Activated CD8-positive, alpha-beta T cell treated with anti-CD3 and anti-CD28 coated beads for 36 hours (primary cell): ENCODE measurements at regions of chr5 and their contacts with region 1.

Region 1: GRCh38 chr5:1641560-1642166 is 117.9 kb upstream of the LPCAT1 start:
- DNase-seq: peak; percentile 94
- ATAC-seq: peak; percentile 96
- H3K4me3 Mint-ChIP-seq: no peak overlapping the region
- H3K27ac Mint-ChIP-seq: no peak overlapping the region
- H3K4me1 Mint-ChIP-seq: peaks cover 11% of the 10 kb centered on the region
- H3K27me3 Mint-ChIP-seq: peaks cover 32% of the 10 kb centered on the region
- CTCF ChIP-seq: peak; percentile 99

Region 2: GRCh38 chr5:1380011-1380817 is 261.4 kb before region 1 on chr5:
- CTCF ChIA-PET with region 1: interaction called, 13 read pairs
- POLR2A ChIA-PET with region 1: no interaction called
- intact Hi-C with region 1: loop called (anchors 10 kb)
- DNase-seq: peak; percentile 62
- ATAC-seq: peak; percentile 90
- H3K4me3 Mint-ChIP-seq: peak overlapping the region; percentile 55
- H3K27ac Mint-ChIP-seq: peak overlapping the region; percentile 59
- H3K4me1 Mint-ChIP-seq: peaks cover 7% of the 10 kb centered on the region
- H3K27me3 Mint-ChIP-seq: peaks cover 1% of the 10 kb centered on the region
- CTCF ChIP-seq: peak; percentile 87

Region 3: GRCh38 chr5:1479581-1480188 is 162.0 kb before region 1 on chr5:
- CTCF ChIA-PET with region 1: interaction called, 20 read pairs
- POLR2A ChIA-PET with region 1: no interaction called
- intact Hi-C with region 1: no loop called
- DNase-seq: peak; percentile 68
- ATAC-seq: peak; percentile 81
- H3K4me3 Mint-ChIP-seq: no peak overlapping the region
- H3K27ac Mint-ChIP-seq: no peak overlapping the region
- H3K4me1 Mint-ChIP-seq: peaks cover 9% of the 10 kb centered on the region
- H3K27me3 Mint-ChIP-seq: no peaks in the 10 kb centered on the region
- CTCF ChIP-seq: peak; percentile 91

Region 4: DNA sequence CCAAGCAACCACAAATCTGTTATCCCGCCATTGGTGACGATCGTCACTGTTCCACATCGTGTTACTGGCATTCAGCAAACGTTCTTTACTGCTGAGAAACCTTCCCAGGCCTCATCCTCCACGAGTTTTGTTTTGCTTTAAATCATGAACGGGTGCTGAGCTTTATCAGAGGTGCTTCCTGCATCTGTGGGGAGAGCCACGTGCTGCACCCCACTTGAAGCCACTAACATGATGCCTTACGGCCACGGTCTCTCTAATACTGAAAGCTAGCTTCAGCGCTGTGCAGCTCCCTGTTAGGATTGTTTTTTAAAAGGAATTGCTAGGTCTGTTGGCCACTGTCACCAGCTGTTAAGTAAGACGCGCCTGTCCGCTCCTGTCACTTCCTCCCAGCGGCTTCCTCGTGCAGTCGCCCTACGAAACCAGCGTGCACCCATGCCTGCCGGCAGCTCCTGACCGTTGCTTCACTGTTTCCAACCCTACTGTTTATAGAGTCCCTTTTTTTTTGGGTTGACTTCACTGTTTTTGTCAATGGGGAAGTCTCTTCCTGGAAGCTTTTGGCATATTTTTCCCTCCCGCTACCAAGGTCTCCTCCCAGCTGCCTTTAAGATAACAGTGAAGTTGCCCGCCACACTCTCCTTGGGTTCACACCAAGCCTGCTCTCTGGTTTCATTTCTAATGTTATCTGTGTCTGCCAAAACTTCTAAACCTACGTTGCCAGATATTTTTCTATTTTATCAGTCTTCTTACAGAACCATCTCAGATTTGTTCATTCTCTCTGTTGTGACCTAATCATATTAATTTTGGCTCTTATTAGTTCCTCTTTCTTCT is 138.2 kb before region 1 on chr5:
- CTCF ChIA-PET with region 1: interaction called, 12 read pairs
- POLR2A ChIA-PET with region 1: no interaction called
- intact Hi-C with region 1: no loop called
- DNase-seq: no peak
- ATAC-seq: no peak
- H3K4me3 Mint-ChIP-seq: no peak overlapping the region
- H3K27ac Mint-ChIP-seq: no peak overlapping the region
- H3K4me1 Mint-ChIP-seq: peaks cover 32% of the 10 kb centered on the region
- H3K27me3 Mint-ChIP-seq: no peaks in the 10 kb centered on the region
- CTCF ChIP-seq: no peak

Region 5: GRCh38 chr5:1568201-1568979 is 73.3 kb before region 1 on chr5:
- CTCF ChIA-PET with region 1: no interaction called
- POLR2A ChIA-PET with region 1: no interaction called
- intact Hi-C with region 1: no loop called
- DNase-seq: no peak
- ATAC-seq: no peak
- H3K4me3 Mint-ChIP-seq: no peak overlapping the region
- H3K27ac Mint-ChIP-seq: no peak overlapping the region
- H3K4me1 Mint-ChIP-seq: no peaks in the 10 kb centered on the region
- H3K27me3 Mint-ChIP-seq: no peaks in the 10 kb centered on the region
- CTCF ChIP-seq: no peak

Region 6: GRCh38 chr5:1652596-1653345 is 11.1 kb after region 1 on chr5:
- CTCF ChIA-PET with region 1: interaction called, 29 read pairs
- POLR2A ChIA-PET with region 1: no interaction called
- intact Hi-C with region 1: no loop called
- DNase-seq: no peak
- ATAC-seq: no peak
- H3K4me3 Mint-ChIP-seq: no peak overlapping the region
- H3K27ac Mint-ChIP-seq: no peak overlapping the region
- H3K4me1 Mint-ChIP-seq: peaks cover 9% of the 10 kb centered on the region
- H3K27me3 Mint-ChIP-seq: peaks cover 41% of the 10 kb centered on the region
- CTCF ChIP-seq: no peak